ENCODE measurements at regions of chr3 and their contacts with region 1.

Region 1: GRCh38 chr3:5136211-5136918 is 14.3 kb downstream of the ARL8B start:
- DNase-seq: no peak
- H3K4me3 ChIP-seq: no peak overlapping the region
- H3K27ac ChIP-seq: no peak overlapping the region
- H3K4me1 ChIP-seq: peaks cover 24% of the 10 kb centered on the region
- H3K27me3 ChIP-seq: no peaks in the 10 kb centered on the region
- CTCF ChIP-seq: peak; percentile 25 to 37
- POLR2A ChIP-seq: no peak

Region 2: GRCh38 chr3:5187156-5187919 is 51.0 kb after region 1 on chr3 and contains the start of gene EDEM1:
- CTCF ChIA-PET with region 1: interaction called, 4 read pairs
- POLR2A ChIA-PET with region 1: no interaction called
- dilution Hi-C with region 1: no loop called
- intact Hi-C with region 1: loop called (anchors 1 kb)
- DNase-seq: peak; percentile 98
- H3K4me3 ChIP-seq: peak within 1 kb of the TSS; percentile 82 to 88 (median 83)
- H3K27ac ChIP-seq: peak within 1 kb of the TSS; percentile 92
- H3K4me1 ChIP-seq: peaks cover 21% of the 10 kb centered on the region
- H3K27me3 ChIP-seq: no peaks in the 10 kb centered on the region
- CTCF ChIP-seq: no peak
- POLR2A ChIP-seq: peak; percentile 72
- total RNA-seq, gene EDEM1: 61.1 and 65.4 TPM in 2 replicates

Measured in endothelial cell of umbilical vein (primary cell).